ENCODE measurements at regions of chr6 and their contacts with region 1.

Region 1: DNA sequence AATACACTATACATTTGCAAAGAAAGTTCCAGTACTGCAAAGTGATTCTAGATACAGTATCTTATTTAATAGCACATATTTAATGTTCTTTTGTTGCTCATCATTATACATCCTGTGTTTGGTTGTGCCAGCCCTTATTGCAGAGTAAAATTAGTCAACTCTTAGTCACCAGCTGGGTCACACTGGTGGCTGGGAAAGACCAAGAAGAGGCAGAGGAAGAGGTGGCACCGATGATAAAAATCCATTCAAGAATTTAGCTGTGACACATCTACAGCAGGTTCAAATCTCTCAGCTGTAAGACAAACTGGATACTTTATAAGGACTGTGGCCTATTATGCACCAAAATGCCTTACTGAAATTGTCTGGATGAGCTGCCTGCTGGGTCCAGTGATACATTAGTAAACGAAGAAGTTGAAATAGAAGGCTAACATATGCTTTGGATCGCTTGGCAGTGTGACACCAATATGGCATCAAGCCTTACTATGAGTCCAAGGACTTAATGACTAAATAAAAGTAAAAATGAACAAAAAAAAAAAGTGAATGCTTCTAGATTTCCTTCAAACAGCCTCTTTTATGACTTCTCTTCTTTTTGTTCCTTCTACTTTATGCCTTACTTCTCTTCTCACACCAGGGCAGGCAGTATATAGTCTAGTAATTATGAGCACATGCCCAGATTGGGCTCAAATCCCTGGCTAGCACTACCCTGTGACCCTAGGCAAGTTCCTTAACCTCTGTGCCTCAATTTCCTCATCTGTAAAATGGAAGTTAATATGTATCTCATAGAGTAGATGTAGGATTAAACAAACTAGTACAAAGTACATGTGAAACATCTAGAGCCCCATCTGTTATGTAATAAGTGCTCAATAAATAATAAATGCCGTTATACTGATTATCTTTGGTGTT is 29.4 kb upstream of the RNF8 start:
- DNase-seq: no peak
- ATAC-seq: peak in 2 of 4 donors; percentile 2 to 49
- H3K4me3 ChIP-seq: no peak overlapping the region
- H3K27ac ChIP-seq: peak overlapping the region; percentile 42 to 55 (median 55)
- H3K4me1 ChIP-seq: peaks cover 0 to 20% (median 10%) of the 10 kb centered on the region in 4 donors
- H3K27me3 ChIP-seq: no peaks in the 10 kb centered on the region
- CTCF ChIP-seq: no peak
- POLR2A ChIP-seq: no peak

Region 2: DNA sequence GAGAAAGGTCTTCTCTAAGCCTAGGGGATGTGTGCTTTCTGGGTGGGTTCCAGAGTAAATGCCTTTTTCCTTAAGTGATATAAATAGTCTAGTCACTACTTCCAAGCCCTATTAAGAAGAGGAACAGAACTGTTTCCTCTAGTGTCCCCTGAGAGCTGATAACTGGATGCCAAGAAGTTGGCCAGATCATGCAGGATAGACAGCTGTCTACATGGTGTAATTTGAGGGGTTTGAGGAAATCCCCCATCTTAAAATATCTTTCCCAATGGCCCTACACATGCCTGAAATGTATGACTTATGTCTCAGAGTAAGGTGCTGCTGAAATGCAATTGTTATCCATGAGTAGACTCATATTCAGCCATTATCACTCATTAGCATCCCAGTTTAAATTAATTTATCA is 174.6 kb before region 1 on chr6:
- intact Hi-C with region 1: no loop called
- DNase-seq: no peak
- ATAC-seq: no peak
- H3K4me3 ChIP-seq: no peak overlapping the region
- H3K27ac ChIP-seq: no peak overlapping the region
- H3K4me1 ChIP-seq: peaks cover 0 to 30% (median 7%) of the 10 kb centered on the region in 4 donors
- H3K27me3 ChIP-seq: no peaks in the 10 kb centered on the region
- CTCF ChIP-seq: no peak
- POLR2A ChIP-seq: no peak

Region 3: DNA sequence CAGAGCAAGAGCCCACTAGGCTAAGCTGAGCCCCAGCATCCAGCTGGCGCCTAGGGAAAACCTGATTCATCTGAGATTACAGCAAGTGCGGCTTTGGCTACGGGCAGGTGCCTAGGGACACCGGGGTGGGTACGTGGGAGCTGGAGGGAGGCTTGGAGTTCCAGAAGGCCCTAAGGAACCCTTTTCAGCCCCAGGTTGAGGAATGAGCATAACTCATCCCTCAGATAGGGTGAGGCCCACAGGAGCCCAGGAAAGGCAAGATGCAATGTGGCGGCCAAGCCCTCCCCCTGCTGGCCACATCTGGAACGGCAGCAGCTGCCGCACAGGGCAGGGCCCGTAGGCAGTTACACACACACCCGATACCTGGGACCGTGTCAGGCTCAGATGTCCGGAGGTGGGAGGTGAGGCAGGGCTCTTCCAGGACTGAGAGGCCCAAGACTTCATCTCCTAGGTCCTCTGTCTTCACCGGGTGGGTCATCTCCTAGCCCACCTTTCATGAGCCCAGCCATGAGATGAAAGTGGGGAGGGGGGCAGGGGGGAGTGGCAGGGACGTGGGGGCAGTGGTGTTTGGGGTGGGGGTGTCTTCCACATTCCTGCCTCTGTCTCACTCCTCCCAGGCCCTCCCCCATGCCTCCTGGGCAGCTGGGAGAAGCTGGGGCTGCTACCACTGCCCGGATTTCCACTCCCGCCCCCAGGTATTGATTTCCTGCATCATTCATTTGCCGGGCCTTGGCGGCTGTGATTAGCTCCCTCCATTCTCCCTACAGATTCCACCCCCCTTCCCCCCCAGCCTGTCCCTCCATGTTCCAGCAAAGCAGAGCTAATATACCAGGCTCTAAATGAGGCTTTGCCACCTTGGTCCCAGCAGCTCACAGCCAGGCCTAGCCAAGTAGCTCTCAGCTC is 367.8 kb after region 1 on chr6:
- intact Hi-C with region 1: loop called in 1 of 2 experiments (anchors 10 kb)
- DNase-seq: peak; percentile 68 to 74 (median 72)
- ATAC-seq: peak; percentile 88 to 93 (median 91)
- H3K4me3 ChIP-seq: no peak overlapping the region
- H3K27ac ChIP-seq: no peak overlapping the region
- H3K4me1 ChIP-seq: peaks cover 0 to 8% (median 0%) of the 10 kb centered on the region in 4 donors
- H3K27me3 ChIP-seq: peaks cover 0 to 13% of the 10 kb centered on the region in 2 donors
- CTCF ChIP-seq: peak; percentile 95 to 98 (median 96)
- POLR2A ChIP-seq: no peak

Region 4: GRCh38 chr6:37742401-37742760 is 418.0 kb after region 1 on chr6:
- intact Hi-C with region 1: no loop called
- DNase-seq: no peak
- ATAC-seq: peak; percentile 44 to 58 (median 47)
- H3K4me3 ChIP-seq: peak overlapping the region in 2 of 3 donors; percentile 21 to 23
- H3K27ac ChIP-seq: no peak overlapping the region
- H3K4me1 ChIP-seq: peaks cover 0 to 13% (median 4%) of the 10 kb centered on the region in 4 donors
- H3K27me3 ChIP-seq: no peaks in the 10 kb centered on the region
- CTCF ChIP-seq: no peak
- POLR2A ChIP-seq: no peak